Heart left ventricle (tissue), 16 donors: ENCODE measurements at regions of chr12 and their contacts with region 1.

Region 1: GRCh38 chr12:49707128-49707811 is at the start of gene FMNL3:
- DNase-seq: peak; percentile 98 to 100 (median 98)
- ATAC-seq: peak; percentile 95 to 99 (median 96)
- H3K4me3 ChIP-seq: peak within 1 kb of the TSS; percentile 69 to 97 (median 86)
- H3K27ac ChIP-seq: peak within 1 kb of the TSS; percentile 89 to 99 (median 97)
- H3K4me1 ChIP-seq: peaks cover 0 to 46% (median 32%) of the 10 kb centered on the region in 12 donors
- H3K27me3 ChIP-seq: peaks cover 0 to 7% (median 0%) of the 10 kb centered on the region in 9 donors
- CTCF ChIP-seq: peak; percentile 92 to 99 (median 96)
- POLR2A ChIP-seq: peak in 1 of 2 donors; percentile 35
- total RNA-seq, gene FMNL3: 8.7 to 33.9 (median 14.3) TPM

Region 2: DNA sequence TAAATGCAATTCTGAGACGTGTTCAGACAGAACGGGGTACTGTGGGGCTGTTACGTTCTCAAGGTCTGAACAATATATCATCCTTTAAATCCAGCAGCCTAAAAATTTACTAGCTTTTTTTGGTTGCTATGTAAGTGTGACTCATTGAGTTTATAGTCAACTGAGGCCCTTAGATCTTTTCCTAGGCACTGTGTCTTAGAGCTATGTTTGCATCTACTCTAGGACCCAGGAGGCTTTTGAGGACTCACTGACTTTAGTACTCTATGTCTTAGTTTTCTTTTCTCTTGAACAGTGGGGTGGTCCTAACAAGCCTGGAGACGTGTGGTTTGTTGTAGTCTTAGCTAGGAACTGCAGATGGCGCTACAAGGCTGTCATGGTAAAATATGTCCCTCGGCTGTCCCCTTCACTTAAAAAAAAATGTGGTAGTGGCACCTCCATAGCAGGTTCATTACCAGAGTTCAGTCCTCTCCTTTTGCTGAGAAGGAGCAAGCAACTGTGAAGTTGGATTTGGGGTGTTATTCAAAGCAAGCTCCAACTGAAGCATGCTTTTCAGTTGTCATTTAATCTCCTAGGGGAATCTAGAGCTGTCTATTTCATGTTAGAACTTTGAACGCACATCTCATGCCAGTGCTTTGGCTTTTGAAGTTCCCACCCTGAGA is 348.7 kb before region 1 on chr12:
- intact Hi-C with region 1: loop called in 1 of 10 experiments (anchors 5 kb)
- DNase-seq: peak in 1 of 5 donors; percentile 54
- ATAC-seq: peak; percentile 69 to 88 (median 85)
- H3K4me3 ChIP-seq: no peak overlapping the region
- H3K27ac ChIP-seq: no peak overlapping the region
- H3K4me1 ChIP-seq: peaks cover 0 to 8% (median 0%) of the 10 kb centered on the region in 12 donors
- H3K27me3 ChIP-seq: peaks cover 0 to 9% (median 2%) of the 10 kb centered on the region in 9 donors
- CTCF ChIP-seq: peak; percentile 73 to 90 (median 81)
- POLR2A ChIP-seq: no peak

Region 3: DNA sequence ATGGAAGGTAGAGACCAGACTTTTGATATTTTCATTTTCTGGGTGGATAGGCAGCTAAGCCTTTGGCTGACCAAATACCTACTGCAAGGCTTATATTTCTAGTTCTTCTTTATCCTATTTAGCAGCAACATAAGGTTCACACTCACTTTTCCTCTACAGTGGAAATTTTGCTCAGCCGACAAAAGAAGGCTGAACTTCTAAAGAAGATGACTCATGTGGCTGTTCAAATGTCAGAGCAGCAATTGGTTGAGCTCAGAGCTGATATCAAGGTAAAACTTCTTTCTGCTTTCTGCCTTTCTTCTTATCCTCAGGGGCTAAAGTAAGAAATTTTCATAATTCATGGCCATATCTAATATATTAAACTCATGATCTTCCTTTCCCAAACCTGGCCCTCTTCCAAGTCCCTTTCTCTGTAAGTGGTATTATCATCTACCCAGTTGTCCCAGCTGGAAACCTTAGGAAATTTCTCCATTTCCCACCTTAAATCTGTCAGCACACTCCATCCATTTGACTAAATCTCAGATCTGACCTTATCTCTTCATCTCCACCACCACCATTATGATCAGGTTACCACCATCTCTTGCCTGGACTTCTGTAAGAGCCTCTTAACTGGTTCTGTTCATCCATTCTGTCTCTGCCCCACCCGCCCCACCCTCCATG is 188.2 kb before region 1 on chr12:
- intact Hi-C with region 1: no loop called
- DNase-seq: no peak
- ATAC-seq: no peak
- H3K4me3 ChIP-seq: no peak overlapping the region
- H3K27ac ChIP-seq: no peak overlapping the region
- H3K4me1 ChIP-seq: no peaks in the 10 kb centered on the region
- H3K27me3 ChIP-seq: no peaks in the 10 kb centered on the region
- CTCF ChIP-seq: no peak
- POLR2A ChIP-seq: no peak

Region 4: DNA sequence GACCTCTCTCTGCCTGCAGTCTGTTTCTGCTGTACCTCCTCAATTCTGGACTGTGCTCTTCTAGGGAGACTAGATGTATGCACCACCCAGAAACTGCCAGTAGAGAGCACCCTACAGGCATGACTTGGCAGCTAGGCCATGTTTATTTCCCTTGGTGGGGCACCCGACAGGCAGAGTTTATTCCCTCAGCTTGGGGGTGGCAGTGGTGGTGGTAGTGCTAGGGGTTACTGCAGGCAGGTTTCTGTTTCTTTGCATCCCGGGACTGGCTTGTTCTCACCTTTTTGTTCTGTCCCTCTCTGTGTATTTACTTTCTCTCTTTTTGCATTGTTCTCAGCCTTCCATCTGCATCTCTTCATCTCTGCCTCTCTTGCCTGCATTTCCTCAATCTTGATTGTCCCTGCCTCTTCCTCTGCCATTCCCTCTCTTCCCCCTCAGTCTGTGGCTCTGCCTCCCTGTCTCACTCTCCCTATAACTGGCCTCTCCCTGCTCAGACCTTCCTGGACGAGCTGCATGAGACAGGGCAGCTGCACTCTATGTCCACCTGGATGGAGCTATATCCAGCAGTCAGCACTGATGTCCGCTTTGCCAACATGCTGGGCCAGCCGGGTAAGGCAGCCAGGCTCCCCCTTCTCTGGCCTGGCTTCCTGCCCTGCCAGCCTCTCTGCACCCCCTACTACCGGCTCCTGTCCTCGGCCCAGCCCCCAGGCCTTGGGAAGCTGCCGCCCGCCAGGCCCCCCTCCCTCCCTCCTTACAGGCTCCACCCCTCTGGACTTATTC is 70.1 kb before region 1 on chr12:
- intact Hi-C with region 1: loop called in 2 of 10 experiments (anchors 2 kb)
- DNase-seq: peak; percentile 47 to 65 (median 63)
- ATAC-seq: peak; percentile 65 to 81 (median 77)
- H3K4me3 ChIP-seq: no peak overlapping the region
- H3K27ac ChIP-seq: peak overlapping the region in 7 of 12 donors; percentile 4 to 55 (median 42)
- H3K4me1 ChIP-seq: peaks cover 0 to 19% (median 14%) of the 10 kb centered on the region in 12 donors
- H3K27me3 ChIP-seq: no peaks in the 10 kb centered on the region
- CTCF ChIP-seq: peak; percentile 47 to 79 (median 62)
- POLR2A ChIP-seq: no peak

Region 5: DNA sequence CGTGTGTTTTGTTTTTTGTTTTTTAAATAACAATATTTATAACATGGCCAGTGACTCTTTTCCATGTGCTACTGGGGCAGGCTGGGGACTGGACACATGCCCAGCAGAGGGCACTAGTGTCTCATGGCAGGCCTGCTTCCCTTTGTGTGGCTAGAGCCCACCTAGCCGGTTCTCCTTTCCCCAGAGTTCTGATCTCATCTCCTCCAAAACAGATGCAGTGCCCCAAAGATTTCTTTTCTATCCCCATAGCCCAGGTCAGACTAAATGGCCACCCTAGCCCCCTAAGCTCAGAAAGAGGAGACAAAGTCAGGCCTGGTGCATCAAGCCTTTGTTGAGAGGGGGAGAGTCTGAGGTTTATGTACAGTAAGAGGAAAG is 62.7 kb before region 1 on chr12:
- intact Hi-C with region 1: loop called (anchors 1 to 2 kb)
- DNase-seq: peak; percentile 78 to 89 (median 84)
- ATAC-seq: peak; percentile 71 to 82 (median 78)
- H3K4me3 ChIP-seq: no peak overlapping the region
- H3K27ac ChIP-seq: peak overlapping the region in 8 of 12 donors; percentile 23 to 79 (median 48)
- H3K4me1 ChIP-seq: peaks cover 0 to 55% (median 40%) of the 10 kb centered on the region in 12 donors
- H3K27me3 ChIP-seq: no peaks in the 10 kb centered on the region
- CTCF ChIP-seq: peak; percentile 89 to 98 (median 94)
- POLR2A ChIP-seq: no peak

Region 6: GRCh38 chr12:49662998-49663843 is 44.0 kb before region 1 on chr12:
- intact Hi-C with region 1: loop called in 2 of 10 experiments (anchors 1 to 5 kb)
- DNase-seq: peak; percentile 84 to 90 (median 87)
- ATAC-seq: peak; percentile 66 to 93 (median 90)
- H3K4me3 ChIP-seq: peak overlapping the region in 3 of 12 donors; percentile 5 to 29 (median 11)
- H3K27ac ChIP-seq: peak overlapping the region; percentile 71 to 92 (median 85)
- H3K4me1 ChIP-seq: peaks cover 18 to 95% (median 83%) of the 10 kb centered on the region in 12 donors
- H3K27me3 ChIP-seq: no peaks in the 10 kb centered on the region
- CTCF ChIP-seq: no peak
- POLR2A ChIP-seq: no peak

Region 7: DNA sequence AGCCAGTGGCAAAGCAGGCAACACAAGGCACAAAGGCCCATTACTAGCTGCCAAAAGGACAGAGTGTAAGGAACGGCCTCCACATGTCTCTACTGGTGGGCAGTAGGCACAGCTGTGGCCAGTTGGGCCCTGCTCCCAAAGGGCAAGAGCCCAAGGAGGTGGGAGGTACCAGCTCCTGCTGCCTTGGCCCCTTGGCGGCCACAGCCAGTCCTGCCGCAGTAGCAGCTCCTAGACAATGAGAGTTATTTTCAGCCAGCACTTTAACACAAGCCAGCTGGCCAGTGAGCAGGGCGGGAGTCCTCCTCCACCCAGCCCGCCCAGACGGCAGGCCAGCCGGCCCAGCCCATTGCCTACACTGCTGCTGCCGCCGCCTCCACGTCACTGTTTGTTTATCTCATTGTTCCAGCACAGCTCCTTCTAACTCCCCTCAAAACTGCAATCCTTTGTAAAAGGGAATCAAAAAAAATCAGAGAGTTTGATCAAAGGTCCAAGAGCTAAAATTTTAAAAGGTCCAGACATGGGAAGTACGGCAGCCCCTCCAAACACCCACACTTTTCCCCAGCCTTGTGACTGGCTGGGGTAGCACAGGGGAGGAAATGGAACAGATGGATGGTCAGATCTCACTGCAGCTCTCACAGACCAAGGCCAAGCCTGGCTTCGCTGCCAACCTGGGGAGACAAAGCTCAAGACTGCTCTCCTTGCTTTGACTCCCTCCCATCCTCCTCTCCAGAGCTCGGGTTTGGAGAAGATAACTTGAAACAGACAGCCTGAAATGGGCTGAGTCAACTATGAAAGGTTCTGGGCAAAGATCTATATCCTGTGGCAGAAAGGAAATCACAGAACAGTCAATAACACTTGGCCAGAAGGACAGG is 33.6 kb before region 1 on chr12:
- intact Hi-C with region 1: loop called in 9 of 10 experiments (anchors 1 to 5 kb)
- DNase-seq: peak; percentile 93 to 96 (median 95)
- ATAC-seq: peak; percentile 96 to 99 (median 97)
- H3K4me3 ChIP-seq: peak overlapping the region in 5 of 12 donors; percentile 2 to 34 (median 20)
- H3K27ac ChIP-seq: peak overlapping the region; percentile 84 to 99 (median 92)
- H3K4me1 ChIP-seq: peaks cover 43 to 83% (median 69%) of the 10 kb centered on the region in 12 donors
- H3K27me3 ChIP-seq: no peaks in the 10 kb centered on the region
- CTCF ChIP-seq: peak in 11 of 12 donors; percentile 6 to 59 (median 43)
- POLR2A ChIP-seq: peak; percentile 34 to 81